AG04449 (cell line): ENCODE measurements at regions of chr11 and their contacts with region 1.

Region 1: DNA sequence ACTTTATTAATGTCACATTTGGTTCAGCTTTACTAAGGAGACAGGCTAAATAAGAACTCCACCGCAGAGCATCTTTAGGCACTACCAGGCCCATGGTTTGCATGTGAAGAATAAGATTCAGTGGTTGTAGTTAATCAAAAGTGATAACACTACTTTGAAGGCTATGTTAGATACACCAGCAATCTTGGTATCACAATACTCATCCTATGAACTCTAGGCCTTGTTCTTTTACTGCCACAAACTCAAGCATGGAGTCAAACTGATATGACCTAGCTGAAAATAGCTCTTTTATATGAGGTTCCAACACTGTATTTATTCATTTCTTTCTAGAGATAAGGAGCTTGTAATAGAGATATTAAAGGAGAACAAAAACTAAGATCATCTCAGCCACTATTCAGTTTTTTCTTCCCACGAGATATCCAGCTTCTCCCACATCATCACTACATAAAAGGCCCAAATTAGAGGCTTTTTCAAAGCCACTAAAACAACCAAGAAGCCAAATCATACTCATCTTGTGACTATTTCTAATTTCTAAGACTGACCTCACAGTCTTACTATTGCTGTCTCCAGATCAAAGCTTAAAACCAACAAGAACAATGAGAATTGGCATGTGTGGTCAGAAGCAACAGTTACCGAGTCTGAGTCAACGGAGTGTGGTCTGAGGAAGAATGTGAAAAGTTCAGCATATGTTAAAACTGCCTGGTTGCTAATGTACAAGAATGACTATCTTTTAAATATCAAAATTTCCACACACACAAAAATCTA is 25.1 kb upstream of the GUCY1A2 start:
- DNase-seq: peak; percentile 93
- H3K4me3 ChIP-seq: no peak overlapping the region
- CTCF ChIP-seq: no peak

Region 2: GRCh38 chr11:106717222-106717621 is 326.2 kb before region 1 on chr11:
- CTCF ChIA-PET with region 1: interaction called, 58 read pairs
- POLR2A ChIA-PET with region 1: no interaction called
- DNase-seq: no peak
- H3K4me3 ChIP-seq: no peak overlapping the region
- CTCF ChIP-seq: no peak

Region 3: GRCh38 chr11:107006126-107006833 is 37.1 kb before region 1 on chr11:
- CTCF ChIA-PET with region 1: no interaction called
- POLR2A ChIA-PET with region 1: no interaction called
- DNase-seq: no peak
- H3K4me3 ChIP-seq: no peak overlapping the region
- CTCF ChIP-seq: no peak